ENCODE measurements at regions of chr3 and their contacts with region 1.

Region 1: DNA sequence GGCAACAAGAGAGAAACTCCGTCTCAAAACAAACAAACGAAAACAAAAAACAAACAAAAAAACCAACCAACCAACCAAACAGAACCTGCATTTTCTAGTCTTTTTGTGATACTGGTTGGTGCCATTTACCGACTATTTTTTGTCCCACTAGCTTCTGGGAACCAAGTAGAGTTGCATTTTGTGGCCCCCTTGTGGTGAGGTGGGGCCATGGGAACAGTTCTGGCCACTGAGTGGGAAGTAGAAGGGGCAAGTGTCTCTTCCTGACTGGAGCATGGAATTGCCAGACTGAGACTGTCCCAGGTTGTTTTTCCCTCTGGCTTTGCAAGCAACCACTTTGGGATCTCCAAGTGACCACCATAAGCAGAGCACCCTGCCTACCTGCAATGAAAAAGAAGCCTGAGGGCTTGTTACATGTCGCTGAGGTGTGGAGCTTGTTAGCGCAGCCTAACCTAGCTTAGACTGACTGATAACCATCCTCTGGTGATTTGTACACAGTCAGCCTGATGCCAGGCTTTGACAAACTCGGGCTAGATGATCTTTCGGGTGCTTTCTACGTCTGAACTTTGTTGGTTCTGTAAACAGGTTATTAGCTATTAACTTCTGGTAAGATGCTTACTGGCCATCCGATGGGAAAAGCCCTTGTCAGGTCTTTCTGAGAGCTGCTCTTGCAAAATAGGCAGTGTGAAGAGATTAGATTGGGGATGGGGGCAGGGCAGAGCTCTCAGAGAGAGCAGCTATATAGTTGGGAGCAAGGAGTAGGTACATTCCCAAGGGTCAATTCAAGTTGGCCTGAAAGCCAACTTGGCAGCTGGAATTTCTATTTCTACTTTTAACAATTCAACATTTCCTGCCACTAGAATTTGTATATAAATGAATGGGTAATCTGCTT is 172.2 kb downstream of the SSR3 start:
- DNase-seq: peak; percentile 45
- CTCF ChIP-seq: peak; percentile 50

Region 2: GRCh38 chr3:155941354-155941753 is 441.3 kb before region 1 on chr3:
- CTCF ChIA-PET with region 1: no interaction called
- POLR2A ChIA-PET with region 1: no interaction called
- DNase-seq: no peak
- CTCF ChIP-seq: no peak

Region 3: GRCh38 chr3:156174229-156174847 is 208.4 kb before region 1 on chr3:
- CTCF ChIA-PET with region 1: interaction called, 13 read pairs
- POLR2A ChIA-PET with region 1: no interaction called
- DNase-seq: no peak
- CTCF ChIP-seq: peak; percentile 13

Region 4: GRCh38 chr3:156187146-156187769 is 195.4 kb before region 1 on chr3:
- CTCF ChIA-PET with region 1: no interaction called
- POLR2A ChIA-PET with region 1: no interaction called
- DNase-seq: no peak
- CTCF ChIP-seq: no peak

Region 5: GRCh38 chr3:156341831-156342416 is 40.8 kb before region 1 on chr3:
- CTCF ChIA-PET with region 1: interaction called, 15 read pairs
- POLR2A ChIA-PET with region 1: no interaction called
- DNase-seq: peak; percentile 58
- CTCF ChIP-seq: peak; percentile 31

Region 6: GRCh38 chr3:156368189-156368588 is 14.5 kb before region 1 on chr3:
- CTCF ChIA-PET with region 1: interaction called, 31 read pairs
- POLR2A ChIA-PET with region 1: no interaction called
- DNase-seq: peak; percentile 29
- CTCF ChIP-seq: no peak

Region 7: GRCh38 chr3:156396851-156397250 is 14.1 kb after region 1 on chr3:
- CTCF ChIA-PET with region 1: interaction called, 23 read pairs
- POLR2A ChIA-PET with region 1: no interaction called
- DNase-seq: no peak
- CTCF ChIP-seq: no peak